CD4-positive, alpha-beta memory T cell (primary cell): ENCODE measurements at regions of chr20 and their contacts with region 1.

Region 1: DNA sequence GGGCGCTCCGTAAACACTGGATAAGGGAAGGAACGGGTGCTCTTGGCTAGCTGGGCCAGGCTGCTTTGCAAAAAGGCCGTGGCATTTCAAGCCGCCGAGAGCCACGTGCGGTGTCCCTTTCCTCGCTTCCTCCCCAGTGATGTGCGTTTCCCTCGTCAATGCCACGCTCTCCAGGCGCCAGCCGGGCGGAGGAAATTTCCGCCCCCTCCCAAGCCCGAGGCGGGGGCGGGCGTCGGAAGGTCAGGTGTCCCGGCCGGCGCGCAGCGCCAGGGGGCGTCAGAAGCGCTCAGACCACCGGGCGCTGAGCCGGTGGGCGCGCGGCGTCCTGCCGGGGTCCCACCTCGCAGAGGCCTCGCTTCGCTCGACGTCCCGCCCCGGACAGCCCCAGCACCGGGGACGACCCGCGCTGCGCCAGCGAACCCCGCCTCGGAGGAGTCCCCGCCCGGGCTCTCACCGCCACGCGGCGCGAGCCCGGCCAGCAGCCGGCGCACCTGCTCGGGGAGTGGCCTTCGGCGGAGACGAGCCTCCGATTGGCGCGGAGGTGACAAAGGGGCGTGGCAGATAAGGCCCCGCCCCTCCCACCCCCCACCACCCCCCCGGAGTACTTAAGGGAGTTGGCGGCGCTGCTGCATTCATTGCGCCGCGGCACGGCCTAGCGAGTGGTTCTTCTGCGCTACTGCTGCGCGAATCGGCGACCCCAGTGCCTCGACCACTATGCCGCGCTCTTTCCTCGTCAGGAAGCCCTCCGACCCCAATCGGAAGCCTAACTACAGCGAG is at the start of gene SNAI1:
- DNase-seq: peak; percentile 81 to 87 (median 83)
- H3K4me3 ChIP-seq: peak within 1 kb of the TSS in 1 of 2 donors; percentile 23
- H3K4me3 Mint-ChIP-seq: peak within 1 kb of the TSS; percentile 57 to 76 (median 68)
- H3K27ac ChIP-seq: no peak within 1 kb of the TSS
- H3K27ac Mint-ChIP-seq: peak within 1 kb of the TSS; percentile 36 to 84 (median 74)
- H3K4me1 ChIP-seq: peaks cover 20% of the 10 kb centered on the region
- H3K4me1 Mint-ChIP-seq: peaks cover 9 to 33% (median 16%) of the 10 kb centered on the region in 4 donors
- H3K27me3 ChIP-seq: no peaks in the 10 kb centered on the region
- H3K27me3 Mint-ChIP-seq: no peaks in the 10 kb centered on the region
- total RNA-seq, gene SNAI1: 0.19 to 0.44 TPM

Region 2: DNA sequence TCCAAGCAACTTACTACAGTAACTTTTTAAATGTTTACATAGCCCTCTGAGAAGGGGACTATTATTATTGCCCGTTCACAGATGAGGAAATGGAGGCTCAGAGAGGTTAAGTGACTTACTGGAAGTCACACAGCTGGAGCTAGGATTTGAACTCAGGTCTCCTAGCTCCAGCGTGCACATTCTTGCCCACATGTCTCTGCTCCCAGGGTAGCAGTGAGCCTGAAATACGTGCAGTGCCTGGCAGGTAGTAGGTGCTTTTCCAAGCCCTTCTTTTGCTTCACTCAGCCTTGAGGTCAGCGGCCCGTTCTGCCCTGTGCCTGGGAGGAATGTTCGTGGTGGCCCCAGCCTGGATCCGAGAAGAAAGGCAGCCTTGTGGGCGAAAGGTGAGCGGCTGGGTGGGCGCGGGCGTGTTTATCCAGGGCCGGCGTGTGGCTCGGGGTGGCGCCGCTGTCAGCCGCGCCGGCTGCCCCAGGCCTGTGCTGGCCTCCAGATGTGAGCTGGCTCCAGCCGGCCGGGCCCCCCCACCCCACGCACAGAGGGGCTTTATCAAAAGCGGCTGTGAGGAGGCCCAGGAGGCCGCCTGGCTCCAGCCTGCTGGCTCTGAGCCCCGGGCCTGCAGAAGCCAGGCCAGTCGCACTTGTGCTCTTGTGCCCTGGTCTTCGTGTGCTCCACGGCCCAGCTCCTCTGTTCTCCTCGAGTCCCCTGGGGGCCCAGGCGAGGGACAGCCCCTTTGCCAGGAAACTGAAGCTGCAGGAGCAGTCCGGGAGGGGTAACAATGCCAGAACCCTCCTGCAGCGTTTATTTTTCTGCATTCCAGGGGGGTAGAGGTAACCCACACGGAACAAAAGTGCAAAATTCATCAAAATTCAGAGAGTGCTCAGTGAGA is 72.3 kb after region 1 on chr20:
- CTCF ChIA-PET with region 1: no interaction called
- POLR2A ChIA-PET with region 1: no interaction called
- intact Hi-C with region 1: no loop called
- DNase-seq: no peak
- H3K4me3 ChIP-seq: no peak overlapping the region
- H3K4me3 Mint-ChIP-seq: no peak overlapping the region
- H3K27ac ChIP-seq: no peak overlapping the region
- H3K27ac Mint-ChIP-seq: no peak overlapping the region
- H3K4me1 ChIP-seq: no peaks in the 10 kb centered on the region
- H3K4me1 Mint-ChIP-seq: peaks cover 0 to 2% (median 0%) of the 10 kb centered on the region in 4 donors
- H3K27me3 ChIP-seq: no peaks in the 10 kb centered on the region
- H3K27me3 Mint-ChIP-seq: peaks cover 9 to 10% of the 10 kb centered on the region in 2 donors

Region 3: DNA sequence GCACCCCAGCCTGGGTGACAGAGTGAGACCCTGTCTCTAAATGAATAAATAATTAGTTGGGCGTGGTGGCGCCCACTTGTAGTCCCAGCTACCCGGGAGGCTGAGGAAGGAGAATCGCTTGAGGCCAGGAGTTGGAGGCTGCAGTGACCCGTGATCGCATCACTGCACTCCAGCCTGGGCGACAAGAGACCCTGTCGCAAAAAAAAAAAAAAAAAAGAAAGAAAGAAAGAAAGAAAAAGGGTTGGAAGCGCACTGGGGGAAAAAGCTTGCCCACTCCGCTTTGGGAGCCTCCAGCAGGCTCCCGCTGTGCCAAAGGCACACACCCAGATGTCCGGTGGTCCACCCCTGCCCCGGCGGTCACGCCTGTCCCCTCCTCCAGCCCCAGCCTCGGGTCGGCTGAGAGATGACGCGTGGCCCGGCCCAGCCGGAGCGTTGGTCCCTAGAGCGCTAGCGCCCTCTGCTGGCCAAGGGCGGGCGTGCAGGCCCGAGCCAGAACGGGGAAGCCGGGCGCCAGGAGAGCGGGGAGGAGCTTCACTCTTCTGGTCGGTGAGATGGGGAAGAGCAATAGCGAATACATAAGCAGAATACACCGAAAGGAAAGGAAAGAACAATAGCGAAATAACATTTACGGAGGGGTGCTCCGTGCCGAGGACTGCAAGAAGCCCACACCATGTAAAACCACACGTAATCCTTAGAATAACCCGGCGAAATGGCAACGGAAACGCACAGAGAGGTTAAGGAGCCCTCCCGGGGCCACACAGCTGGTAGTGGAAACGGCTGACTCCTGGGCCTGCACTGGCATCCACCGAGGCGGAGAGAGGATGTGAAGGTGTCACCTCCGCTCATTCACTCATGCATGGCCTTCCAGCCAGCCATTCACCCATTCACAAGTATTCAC is 88.7 kb after region 1 on chr20:
- CTCF ChIA-PET with region 1: interaction called, 265 read pairs
- POLR2A ChIA-PET with region 1: interaction called, 8 read pairs
- intact Hi-C with region 1: loop called (anchors 1 kb)
- DNase-seq: peak; percentile 79 to 90 (median 83)
- H3K4me3 ChIP-seq: peak overlapping the region; percentile 0 to 34
- H3K4me3 Mint-ChIP-seq: peak overlapping the region; percentile 71 to 79 (median 74)
- H3K27ac ChIP-seq: no peak overlapping the region
- H3K27ac Mint-ChIP-seq: peak overlapping the region in 3 of 7 donors; percentile 40 to 84 (median 81)
- H3K4me1 ChIP-seq: peaks cover 6% of the 10 kb centered on the region
- H3K4me1 Mint-ChIP-seq: peaks cover 3 to 6% (median 5%) of the 10 kb centered on the region in 4 donors
- H3K27me3 ChIP-seq: no peaks in the 10 kb centered on the region
- H3K27me3 Mint-ChIP-seq: peaks cover 0 to 2% of the 10 kb centered on the region in 2 donors

Region 4: GRCh38 chr20:50085452-50086365 is 103.2 kb after region 1 on chr20:
- CTCF ChIA-PET with region 1: interaction called, 29 read pairs
- POLR2A ChIA-PET with region 1: interaction called, 3 read pairs
- intact Hi-C with region 1: loop called (anchors 5 kb)
- DNase-seq: peak; percentile 39 to 53 (median 47)
- H3K4me3 ChIP-seq: peak overlapping the region in 1 of 2 donors; percentile 17
- H3K4me3 Mint-ChIP-seq: peak overlapping the region; percentile 82 to 91 (median 84)
- H3K27ac ChIP-seq: peak overlapping the region; percentile 27
- H3K27ac Mint-ChIP-seq: peak overlapping the region; percentile 44 to 92 (median 77)
- H3K4me1 ChIP-seq: peaks cover 17% of the 10 kb centered on the region
- H3K4me1 Mint-ChIP-seq: peaks cover 18 to 40% (median 28%) of the 10 kb centered on the region in 4 donors
- H3K27me3 ChIP-seq: no peaks in the 10 kb centered on the region
- H3K27me3 Mint-ChIP-seq: no peaks in the 10 kb centered on the region

Region 5: DNA sequence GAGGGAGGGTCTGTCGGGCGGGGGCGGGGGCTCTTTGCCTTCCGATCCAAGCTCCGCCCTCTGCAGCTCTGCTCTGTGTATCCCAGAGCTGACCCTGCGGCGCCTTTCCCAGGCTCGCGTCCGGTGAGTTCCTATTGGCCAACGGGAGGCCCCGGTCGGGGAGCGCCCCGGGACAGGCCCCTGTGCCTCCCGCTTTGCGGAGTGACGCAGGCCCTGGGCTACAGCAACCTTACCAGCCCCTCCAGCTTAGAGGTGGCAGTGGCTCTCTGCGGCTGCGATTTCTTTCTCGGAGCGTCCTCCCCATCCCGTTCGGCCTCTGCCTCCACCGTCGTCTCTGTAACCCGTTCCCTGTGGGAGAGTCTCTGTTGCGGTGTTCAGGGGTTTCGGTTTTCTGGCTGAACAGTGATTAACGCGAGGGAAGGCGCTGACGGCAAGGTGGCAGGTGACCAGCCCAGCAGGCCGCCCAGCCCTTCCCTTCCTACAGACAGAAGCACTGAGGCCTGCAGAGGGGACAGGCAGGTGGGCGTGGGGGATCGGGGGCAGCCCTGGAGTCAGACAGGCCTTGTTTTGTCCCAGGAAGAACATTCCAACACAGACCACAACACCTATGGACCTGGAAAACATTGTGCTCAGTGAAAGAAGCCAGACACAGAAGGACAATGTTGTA is 189.9 kb after region 1 on chr20:
- CTCF ChIA-PET with region 1: interaction called, 68 read pairs
- POLR2A ChIA-PET with region 1: interaction called, 5 read pairs
- intact Hi-C with region 1: loop called (anchors 1 kb)
- DNase-seq: no peak
- H3K4me3 ChIP-seq: no peak overlapping the region
- H3K4me3 Mint-ChIP-seq: peak overlapping the region in 1 of 8 donors; percentile 8
- H3K27ac ChIP-seq: no peak overlapping the region
- H3K27ac Mint-ChIP-seq: peak overlapping the region in 1 of 7 donors; percentile 1
- H3K4me1 ChIP-seq: no peaks in the 10 kb centered on the region
- H3K4me1 Mint-ChIP-seq: peaks cover 0 to 5% (median 4%) of the 10 kb centered on the region in 4 donors
- H3K27me3 ChIP-seq: no peaks in the 10 kb centered on the region
- H3K27me3 Mint-ChIP-seq: peaks cover 4 to 11% of the 10 kb centered on the region in 2 donors

Region 6: GRCh38 chr20:50179507-50180016 is 197.0 kb after region 1 on chr20:
- CTCF ChIA-PET with region 1: interaction called, 68 read pairs
- POLR2A ChIA-PET with region 1: no interaction called
- intact Hi-C with region 1: loop called (anchors 1 kb)
- DNase-seq: peak in 1 of 5 donors; percentile 4
- H3K4me3 ChIP-seq: no peak overlapping the region
- H3K4me3 Mint-ChIP-seq: no peak overlapping the region
- H3K27ac ChIP-seq: no peak overlapping the region
- H3K27ac Mint-ChIP-seq: peak overlapping the region in 1 of 7 donors; percentile 53
- H3K4me1 ChIP-seq: no peaks in the 10 kb centered on the region
- H3K4me1 Mint-ChIP-seq: peaks cover 0 to 7% (median 0%) of the 10 kb centered on the region in 4 donors
- H3K27me3 ChIP-seq: no peaks in the 10 kb centered on the region
- H3K27me3 Mint-ChIP-seq: peaks cover 2 to 4% of the 10 kb centered on the region in 2 donors

Region 7: DNA sequence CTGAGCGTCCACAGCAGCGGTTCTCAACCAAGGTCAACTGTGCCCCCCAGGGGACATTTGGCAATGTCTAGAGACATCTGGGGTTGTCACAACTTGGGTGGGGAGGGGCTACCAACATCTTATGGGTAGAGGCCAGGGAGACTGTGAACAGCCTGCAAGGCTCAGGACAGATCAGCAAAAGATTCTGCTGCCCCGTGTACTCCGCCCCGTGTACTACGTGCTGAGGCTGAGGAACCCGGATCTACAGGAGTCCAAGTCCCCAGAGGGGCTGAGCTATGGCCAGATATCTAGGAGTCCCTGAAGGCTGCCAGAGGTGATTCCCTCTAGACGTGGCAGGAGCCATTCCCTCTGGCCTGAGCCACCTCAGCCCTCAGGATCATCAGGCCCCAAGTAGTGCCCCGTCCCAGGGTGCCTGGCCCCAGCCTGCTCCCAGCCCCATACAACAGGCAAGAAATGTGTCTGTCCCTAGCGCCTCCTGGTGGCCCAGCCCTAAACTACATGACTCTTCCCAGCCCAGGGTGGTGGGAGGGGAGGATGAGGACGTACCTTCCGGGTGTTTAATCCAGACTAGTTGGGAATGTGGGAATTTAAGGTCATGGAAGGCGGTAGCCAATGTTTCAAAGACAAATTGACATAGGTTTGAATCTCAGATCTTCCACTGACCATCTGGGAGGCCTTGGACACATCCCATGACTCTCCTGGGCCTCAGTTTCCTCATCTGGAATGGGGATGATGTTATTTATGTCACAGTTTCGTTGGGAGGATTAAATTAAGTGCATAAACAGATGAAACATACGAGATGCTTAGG is 478.1 kb after region 1 on chr20:
- CTCF ChIA-PET with region 1: interaction called, 5 read pairs
- POLR2A ChIA-PET with region 1: no interaction called
- intact Hi-C with region 1: loop called (anchors 10 kb)
- DNase-seq: peak; percentile 70 to 80 (median 76)
- H3K4me3 ChIP-seq: no peak overlapping the region
- H3K4me3 Mint-ChIP-seq: no peak overlapping the region
- H3K27ac ChIP-seq: no peak overlapping the region
- H3K27ac Mint-ChIP-seq: peak overlapping the region in 2 of 7 donors; percentile 15 to 37
- H3K4me1 ChIP-seq: peaks cover 8% of the 10 kb centered on the region
- H3K4me1 Mint-ChIP-seq: peaks cover 0 to 5% (median 4%) of the 10 kb centered on the region in 4 donors
- H3K27me3 ChIP-seq: no peaks in the 10 kb centered on the region
- H3K27me3 Mint-ChIP-seq: peaks cover 2 to 10% of the 10 kb centered on the region in 2 donors